ENCODE measurements at regions of chr5 and their contacts with region 1.

Region 1: DNA sequence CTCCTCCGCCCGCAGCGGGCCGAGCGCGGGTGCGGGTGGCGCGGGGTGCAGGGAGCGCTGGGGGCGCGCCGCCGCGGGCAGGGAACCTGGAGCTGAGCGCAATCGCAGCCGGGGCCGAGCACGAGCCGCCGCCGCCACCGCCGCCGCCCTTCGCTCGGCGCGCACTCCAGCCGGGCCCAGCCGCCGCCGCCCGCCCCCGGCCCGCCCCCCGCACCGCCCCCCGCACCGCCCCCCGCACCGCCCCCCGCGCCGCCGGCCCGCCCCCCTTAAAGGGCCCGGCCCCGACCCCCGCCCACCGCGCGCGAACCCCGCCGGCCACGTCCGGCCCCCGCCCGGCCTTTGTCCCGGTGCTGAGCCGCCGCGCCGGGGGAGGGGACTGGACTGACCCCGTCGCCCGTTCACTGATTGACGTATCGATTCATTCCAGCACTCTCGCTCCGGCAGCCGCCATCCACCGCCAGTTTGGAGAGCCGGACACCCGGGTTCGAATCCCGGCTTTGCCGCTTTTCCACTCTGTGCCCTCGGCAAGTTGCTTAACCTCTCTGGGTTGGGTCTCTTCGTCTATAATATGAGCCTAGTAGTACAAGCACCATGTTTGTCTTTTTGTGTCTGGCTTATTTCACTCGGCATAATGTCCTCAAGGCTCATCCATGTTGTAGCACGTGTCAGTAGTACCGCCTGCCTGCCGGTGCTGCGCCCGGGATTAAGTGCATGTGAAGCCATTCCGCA is at the start of gene SH3PXD2B:
- DNase-seq: peak; percentile 66 to 69
- ATAC-seq: peak; percentile 28 to 72 (median 54)
- H3K4me3 ChIP-seq: peak within 1 kb of the TSS; percentile 67 to 94 (median 82)
- H3K27ac ChIP-seq: peak within 1 kb of the TSS; percentile 65 to 91 (median 83)
- H3K4me1 ChIP-seq: peaks cover 6 to 70% (median 46%) of the 10 kb centered on the region in 9 donors
- H3K27me3 ChIP-seq: peaks cover 0 to 25% (median 0%) of the 10 kb centered on the region in 7 donors
- CTCF ChIP-seq: no peak
- total RNA-seq, gene SH3PXD2B: 2.9 to 12.5 (median 5.9) TPM

Region 2: GRCh38 chr5:172403189-172403796 is 51.2 kb before region 1 on chr5:
- intact Hi-C with region 1: loop called in 1 of 10 experiments (anchors 5 kb)
- DNase-seq: peak; percentile 69 to 91
- ATAC-seq: peak; percentile 89 to 96 (median 93)
- H3K4me3 ChIP-seq: no peak overlapping the region
- H3K27ac ChIP-seq: peak overlapping the region in 9 of 10 donors; percentile 57 to 91 (median 82)
- H3K4me1 ChIP-seq: peaks cover 0 to 53% (median 29%) of the 10 kb centered on the region in 9 donors
- H3K27me3 ChIP-seq: no peaks in the 10 kb centered on the region
- CTCF ChIP-seq: peak in 1 of 9 donors; percentile 4

Region 3: GRCh38 chr5:172417983-172418630 is 36.4 kb before region 1 on chr5:
- intact Hi-C with region 1: loop called in 1 of 10 experiments (anchors 5 kb)
- DNase-seq: peak; percentile 84 to 94
- ATAC-seq: peak; percentile 88 to 97 (median 92)
- H3K4me3 ChIP-seq: no peak overlapping the region
- H3K27ac ChIP-seq: peak overlapping the region in 9 of 10 donors; percentile 13 to 86 (median 73)
- H3K4me1 ChIP-seq: peaks cover 21 to 81% (median 43%) of the 10 kb centered on the region in 9 donors
- H3K27me3 ChIP-seq: no peaks in the 10 kb centered on the region
- CTCF ChIP-seq: no peak

Region 4: DNA sequence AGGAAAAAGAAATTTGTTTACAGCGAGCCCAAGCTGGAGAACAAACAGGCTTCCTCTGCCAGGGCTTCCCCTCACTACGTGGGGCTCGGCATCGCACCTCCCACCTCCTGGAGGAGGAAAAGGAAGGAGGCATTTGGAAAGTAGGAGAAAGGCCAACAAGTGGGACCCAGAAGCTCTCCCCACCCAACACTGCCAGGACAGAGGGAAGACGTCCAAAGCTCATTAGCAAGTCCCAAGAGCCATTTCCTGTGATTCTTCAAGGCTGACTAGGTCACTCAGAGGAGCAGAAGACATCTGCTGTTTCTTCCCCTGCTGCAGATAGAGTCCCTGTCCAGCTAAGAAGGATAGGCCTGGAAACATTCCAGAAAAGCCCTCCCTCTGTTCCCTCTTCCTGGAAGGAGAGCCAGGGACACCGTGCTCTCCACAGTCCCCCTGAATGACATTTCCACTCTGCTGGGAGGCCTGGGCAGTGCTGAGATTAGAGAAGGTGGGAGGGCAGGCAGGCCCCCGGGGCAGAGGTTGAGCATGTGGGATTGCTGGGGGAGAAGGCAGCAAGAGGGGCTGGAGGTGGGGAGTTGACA is 129.5 kb after region 1 on chr5:
- intact Hi-C with region 1: no loop called
- DNase-seq: peak; percentile 72 to 85
- ATAC-seq: peak; percentile 70 to 91 (median 84)
- H3K4me3 ChIP-seq: no peak overlapping the region
- H3K27ac ChIP-seq: peak overlapping the region; percentile 81 to 96 (median 87)
- H3K4me1 ChIP-seq: peaks cover 24 to 86% (median 59%) of the 10 kb centered on the region in 9 donors
- H3K27me3 ChIP-seq: no peaks in the 10 kb centered on the region
- CTCF ChIP-seq: no peak